ENCODE measurements at regions of chr16 and their contacts with region 1.

Region 1: GRCh38 chr16:66924527-66925321 is 611 bp downstream of the RRAD start:
- DNase-seq: peak; percentile 62 to 92 (median 88)
- ATAC-seq: peak; percentile 93
- H3K4me3 ChIP-seq: peak overlapping the region; percentile 32
- H3K27ac ChIP-seq: no peak overlapping the region
- H3K4me1 ChIP-seq: peaks cover 0 to 31% of the 10 kb centered on the region in 2 experiments; a peak in 3 of 5 replicates
- H3K27me3 ChIP-seq: peaks cover 4 to 45% of the 10 kb centered on the region in 2 experiments; a peak in 2 of 5 replicates
- CTCF ChIP-seq: peak; percentile 52 to 77 (median 66)
- EP300 ChIP-seq: no peak
- POLR2A ChIP-seq: no peak
- RAD21 ChIP-seq: peak in 1 of 2 experiments; percentile 66; a peak in 3 of 4 replicates

Region 2: GRCh38 chr16:66335704-66336329 is 588.9 kb before region 1 on chr16:
- CTCF ChIA-PET with region 1: no interaction called
- POLR2A ChIA-PET with region 1: no interaction called
- in situ Hi-C with region 1: no loop called
- intact Hi-C with region 1: no loop called
- DNase-seq: no peak
- ATAC-seq: no peak
- H3K4me3 ChIP-seq: no peak overlapping the region
- H3K27ac ChIP-seq: no peak overlapping the region
- H3K4me1 ChIP-seq: no peaks in the 10 kb centered on the region
- H3K27me3 ChIP-seq: no peaks in the 10 kb centered on the region; a peak in 2 of 5 replicates
- CTCF ChIP-seq: no peak
- EP300 ChIP-seq: no peak
- POLR2A ChIP-seq: no peak
- RAD21 ChIP-seq: no peak

Region 3: DNA sequence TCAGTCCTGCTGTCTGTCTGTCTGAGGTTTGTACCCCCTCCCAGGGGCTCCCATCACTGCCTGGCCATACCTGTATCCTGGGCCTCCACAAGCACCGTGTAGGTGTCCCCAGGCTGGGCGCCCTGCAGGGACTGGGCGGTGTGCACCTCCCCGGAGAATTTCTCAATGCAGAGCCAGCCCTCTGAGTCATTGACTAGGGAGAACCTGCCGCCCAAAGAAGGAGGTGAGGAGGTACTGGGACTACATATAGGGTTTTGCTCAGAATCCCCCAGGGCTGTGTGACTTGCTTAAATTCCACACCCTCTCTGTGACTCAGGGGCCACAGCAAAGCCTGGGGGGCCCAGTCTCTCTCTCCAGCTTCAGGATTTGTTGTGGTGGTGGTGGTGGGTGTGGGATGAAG is 13.6 kb before region 1 on chr16:
- CTCF ChIA-PET with region 1: interaction called, 3 read pairs
- POLR2A ChIA-PET with region 1: interaction called, 10 read pairs
- in situ Hi-C with region 1: no loop called
- intact Hi-C with region 1: no loop called
- DNase-seq: no peak
- ATAC-seq: no peak
- H3K4me3 ChIP-seq: no peak overlapping the region
- H3K27ac ChIP-seq: no peak overlapping the region
- H3K4me1 ChIP-seq: peaks cover 1 to 9% of the 10 kb centered on the region in 2 experiments; a peak in 4 of 5 replicates
- H3K27me3 ChIP-seq: peaks cover 7 to 30% of the 10 kb centered on the region in 2 experiments; a peak in 4 of 5 replicates
- CTCF ChIP-seq: no peak
- EP300 ChIP-seq: no peak
- POLR2A ChIP-seq: no peak
- RAD21 ChIP-seq: no peak

Measured in K562 (cell line).